CD8-positive, alpha-beta memory T cell (primary cell): ENCODE measurements at regions of chr12 and their contacts with region 1.

Region 1: DNA sequence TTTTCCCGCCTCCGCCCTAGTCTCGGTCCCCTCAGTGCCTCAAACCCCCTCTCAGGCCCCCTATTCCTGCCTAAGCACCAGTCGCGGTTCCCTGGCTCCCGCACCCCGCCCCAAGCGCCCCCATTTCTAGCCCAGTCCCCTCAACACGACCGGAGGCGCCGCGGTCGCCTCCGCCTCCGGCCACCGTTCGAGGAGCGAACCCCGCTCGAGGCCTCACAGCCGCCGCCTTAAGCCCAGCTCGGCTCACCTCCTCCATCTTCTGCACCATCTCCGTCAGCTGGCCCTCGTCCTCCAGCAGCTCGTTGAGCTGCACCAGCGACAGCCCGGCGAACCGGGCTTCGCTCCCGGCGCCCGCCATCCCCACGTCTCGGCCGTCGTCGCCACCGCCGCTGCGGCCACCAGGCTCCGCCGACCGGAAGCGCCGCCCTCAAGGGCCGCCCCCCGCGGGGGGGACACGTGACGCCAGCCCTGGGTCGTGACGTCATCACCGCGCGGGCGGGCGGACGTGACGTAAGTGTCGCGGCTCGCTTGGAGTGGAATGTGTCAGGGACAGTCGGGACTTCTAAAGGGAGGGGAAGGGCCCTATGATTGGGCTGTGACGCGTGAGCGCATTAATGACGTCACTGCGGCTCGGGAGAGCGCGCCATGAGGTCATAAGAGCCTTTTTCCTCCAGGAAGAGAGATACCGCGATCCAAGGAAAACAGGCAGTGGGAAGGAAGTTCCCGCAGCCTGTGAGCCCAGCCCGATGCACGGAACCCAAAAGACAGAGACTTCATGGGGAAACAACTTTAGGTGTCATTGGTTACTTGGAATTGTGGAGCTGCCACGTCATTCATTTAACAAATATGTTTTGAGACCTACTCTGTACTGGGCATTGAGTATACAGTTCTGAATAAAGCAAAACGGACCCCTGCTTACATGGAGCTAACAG is at the start of gene VPS37B:
- DNase-seq: peak; percentile 85 to 94 (median 93)
- H3K4me3 ChIP-seq: peak within 1 kb of the TSS; percentile 94
- H3K4me3 Mint-ChIP-seq: peak within 1 kb of the TSS; percentile 85 to 99 (median 94)
- H3K27ac ChIP-seq: peak within 1 kb of the TSS; percentile 91
- H3K27ac Mint-ChIP-seq: peak within 1 kb of the TSS; percentile 94 to 100 (median 99)
- H3K4me1 ChIP-seq: peaks cover 91% of the 10 kb centered on the region
- H3K4me1 Mint-ChIP-seq: peaks cover 80 to 95% (median 95%) of the 10 kb centered on the region in 3 donors
- H3K27me3 ChIP-seq: no peaks in the 10 kb centered on the region
- H3K27me3 Mint-ChIP-seq: peaks cover 0 to 5% of the 10 kb centered on the region in 2 donors
- total RNA-seq, gene VPS37B: 19.3 to 19.9 TPM

Region 2: DNA sequence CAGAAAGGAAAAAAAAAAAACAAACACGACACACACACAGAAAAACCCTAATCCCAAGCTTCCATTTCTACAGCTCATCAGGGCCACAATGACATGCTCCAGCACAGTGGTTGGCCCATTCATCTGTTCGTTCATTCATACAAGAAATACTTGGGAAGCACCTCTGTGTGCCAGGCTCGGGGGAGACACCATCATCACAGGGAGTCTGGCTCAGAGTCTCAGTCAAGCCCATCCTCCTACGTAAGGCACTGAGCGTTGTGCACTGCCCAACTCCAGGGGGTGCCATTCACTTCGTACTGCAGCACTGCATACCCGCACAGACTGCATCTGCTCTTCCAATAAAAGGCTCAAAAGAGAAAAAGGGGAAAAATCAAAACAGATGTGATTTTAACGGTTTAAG is 15.3 kb before region 1 on chr12:
- CTCF ChIA-PET with region 1: interaction called, 43 read pairs
- POLR2A ChIA-PET with region 1: interaction called, 11 read pairs
- DNase-seq: no peak
- H3K4me3 ChIP-seq: no peak overlapping the region
- H3K4me3 Mint-ChIP-seq: peak overlapping the region in 2 of 7 donors; percentile 14 to 58
- H3K27ac ChIP-seq: no peak overlapping the region
- H3K27ac Mint-ChIP-seq: peak overlapping the region; percentile 40 to 97 (median 80)
- H3K4me1 ChIP-seq: peaks cover 66% of the 10 kb centered on the region
- H3K4me1 Mint-ChIP-seq: peaks cover 87 to 96% (median 94%) of the 10 kb centered on the region in 3 donors
- H3K27me3 ChIP-seq: no peaks in the 10 kb centered on the region
- H3K27me3 Mint-ChIP-seq: no peaks in the 10 kb centered on the region

Region 3: GRCh38 chr12:122984612-122985337 is 88.8 kb after region 1 on chr12:
- CTCF ChIA-PET with region 1: no interaction called
- POLR2A ChIA-PET with region 1: no interaction called
- DNase-seq: no peak
- H3K4me3 ChIP-seq: no peak overlapping the region
- H3K4me3 Mint-ChIP-seq: peak overlapping the region in 1 of 7 donors; percentile 57
- H3K27ac ChIP-seq: peak overlapping the region; percentile 1
- H3K27ac Mint-ChIP-seq: peak overlapping the region in 5 of 8 donors; percentile 38 to 73 (median 61)
- H3K4me1 ChIP-seq: peaks cover 32% of the 10 kb centered on the region
- H3K4me1 Mint-ChIP-seq: peaks cover 22 to 41% (median 27%) of the 10 kb centered on the region in 3 donors
- H3K27me3 ChIP-seq: no peaks in the 10 kb centered on the region
- H3K27me3 Mint-ChIP-seq: no peaks in the 10 kb centered on the region